PC-3 (cell line): ENCODE measurements at regions of chr3 and their contacts with region 1.

Region 1: GRCh38 chr3:44905476-44906157 is 31.2 kb downstream of the TGM4 start:
- DNase-seq: no peak
- ATAC-seq: no peak
- H3K4me3 ChIP-seq: no peak overlapping the region
- H3K27ac ChIP-seq: no peak overlapping the region
- H3K4me1 ChIP-seq: peaks cover 11% of the 10 kb centered on the region
- H3K27me3 ChIP-seq: no peaks in the 10 kb centered on the region
- CTCF ChIP-seq: no peak

Region 2: GRCh38 chr3:44685128-44685800 is 220.4 kb before region 1 on chr3:
- CTCF ChIA-PET with region 1: no interaction called
- POLR2A ChIA-PET with region 1: no interaction called
- intact Hi-C with region 1: no loop called
- DNase-seq: no peak
- ATAC-seq: no peak
- H3K4me3 ChIP-seq: no peak overlapping the region
- H3K27ac ChIP-seq: no peak overlapping the region
- H3K4me1 ChIP-seq: no peaks in the 10 kb centered on the region
- H3K27me3 ChIP-seq: no peaks in the 10 kb centered on the region
- CTCF ChIP-seq: no peak

Region 3: DNA sequence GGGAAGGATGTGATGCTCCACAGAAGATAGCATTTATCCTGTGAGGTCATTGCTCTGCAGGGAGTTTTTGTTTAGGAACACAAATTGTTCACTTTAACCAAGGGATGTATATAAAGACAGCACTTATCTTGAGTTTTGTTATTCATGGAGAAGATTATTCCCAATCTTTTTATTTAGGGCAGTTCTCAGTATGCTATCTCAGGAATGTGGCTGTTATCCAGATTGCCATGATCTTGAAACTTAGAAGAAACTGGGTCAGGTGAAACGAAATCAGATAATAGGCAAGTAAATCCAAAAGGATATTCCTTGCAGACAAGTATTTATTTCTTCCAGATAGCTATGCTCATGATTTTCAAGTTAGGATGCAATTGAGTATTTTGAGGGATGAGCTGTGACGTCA is 63.2 kb before region 1 on chr3:
- CTCF ChIA-PET with region 1: no interaction called
- POLR2A ChIA-PET with region 1: interaction called, 14 read pairs
- intact Hi-C with region 1: no loop called
- DNase-seq: no peak
- ATAC-seq: no peak
- H3K4me3 ChIP-seq: no peak overlapping the region
- H3K27ac ChIP-seq: no peak overlapping the region
- H3K4me1 ChIP-seq: no peaks in the 10 kb centered on the region
- H3K27me3 ChIP-seq: no peaks in the 10 kb centered on the region
- CTCF ChIP-seq: no peak